Common myeloid progenitor, CD34-positive (primary cell): ENCODE measurements at regions of chr3 and their contacts with region 1.

Region 1: DNA sequence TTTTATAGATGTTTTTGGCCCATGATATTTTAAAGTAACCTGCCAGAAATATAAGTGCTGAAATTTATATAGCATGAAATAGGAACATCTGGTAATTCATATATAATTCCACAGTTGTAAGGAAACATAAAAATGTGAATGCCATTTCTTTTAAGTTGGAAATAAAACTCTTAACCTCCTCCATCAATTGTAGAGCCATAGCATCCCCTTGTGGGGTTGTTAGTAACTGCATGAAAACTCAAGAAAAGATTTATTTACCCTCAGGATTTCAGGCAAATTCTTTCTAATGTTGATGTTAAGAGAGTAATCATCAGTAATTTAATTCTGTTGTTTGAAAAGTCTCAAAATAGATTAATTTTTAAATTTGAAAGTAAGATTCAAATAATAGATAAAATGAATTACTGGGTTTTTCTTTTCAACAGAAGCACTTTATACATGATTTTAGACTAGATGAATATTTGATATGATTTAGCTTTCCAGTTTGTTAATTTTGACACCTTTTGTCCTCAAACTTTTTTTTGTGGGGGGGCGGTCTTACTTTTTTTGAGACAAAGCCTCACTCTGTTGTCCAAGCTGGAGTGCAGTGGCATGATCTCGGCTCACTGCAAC is 74.7 kb downstream of the RASA2 start:
- DNase-seq: peak; percentile 81 to 92 (median 85)
- H3K4me3 ChIP-seq: no peak overlapping the region
- H3K27ac ChIP-seq: no peak overlapping the region
- H3K4me1 ChIP-seq: peaks cover 20 to 28% (median 24%) of the 10 kb centered on the region in 4 experiments
- H3K27me3 ChIP-seq: no peaks in the 10 kb centered on the region

Region 2: GRCh38 chr3:141243271-141243707 is 318.2 kb before region 1 on chr3:
- CTCF ChIA-PET with region 1: no interaction called
- POLR2A ChIA-PET with region 1: no interaction called
- DNase-seq: no peak
- H3K4me3 ChIP-seq: no peak overlapping the region
- H3K27ac ChIP-seq: no peak overlapping the region
- H3K4me1 ChIP-seq: peaks cover 0 to 3% (median 0%) of the 10 kb centered on the region in 4 experiments
- H3K27me3 ChIP-seq: no peaks in the 10 kb centered on the region

Region 3: GRCh38 chr3:141386611-141387111 is 174.9 kb before region 1 on chr3:
- CTCF ChIA-PET with region 1: no interaction called
- POLR2A ChIA-PET with region 1: no interaction called
- DNase-seq: no peak
- H3K4me3 ChIP-seq: no peak overlapping the region
- H3K27ac ChIP-seq: no peak overlapping the region
- H3K4me1 ChIP-seq: peaks cover 0 to 4% (median 0%) of the 10 kb centered on the region in 4 experiments
- H3K27me3 ChIP-seq: no peaks in the 10 kb centered on the region

Region 4: GRCh38 chr3:141465221-141465620 is 96.3 kb before region 1 on chr3:
- CTCF ChIA-PET with region 1: interaction called, 382 read pairs
- POLR2A ChIA-PET with region 1: interaction called, 3 read pairs
- DNase-seq: no peak
- H3K4me3 ChIP-seq: no peak overlapping the region
- H3K27ac ChIP-seq: no peak overlapping the region
- H3K4me1 ChIP-seq: no peaks in the 10 kb centered on the region
- H3K27me3 ChIP-seq: no peaks in the 10 kb centered on the region

Region 5: GRCh38 chr3:141476033-141476432 is 85.5 kb before region 1 on chr3:
- CTCF ChIA-PET with region 1: interaction called, 37 read pairs
- POLR2A ChIA-PET with region 1: interaction called, 3 read pairs
- DNase-seq: peak in 2 of 3 donors; percentile 77 to 81
- H3K4me3 ChIP-seq: peak overlapping the region in 1 of 7 experiments; percentile 36
- H3K27ac ChIP-seq: no peak overlapping the region
- H3K4me1 ChIP-seq: peaks cover 13 to 28% (median 20%) of the 10 kb centered on the region in 4 experiments
- H3K27me3 ChIP-seq: no peaks in the 10 kb centered on the region

Region 6: GRCh38 chr3:141526709-141527108 is 34.8 kb before region 1 on chr3:
- CTCF ChIA-PET with region 1: interaction called, 11 read pairs
- POLR2A ChIA-PET with region 1: no interaction called
- DNase-seq: no peak
- H3K4me3 ChIP-seq: no peak overlapping the region
- H3K27ac ChIP-seq: no peak overlapping the region
- H3K4me1 ChIP-seq: peaks cover 20 to 60% (median 37%) of the 10 kb centered on the region in 4 experiments
- H3K27me3 ChIP-seq: no peaks in the 10 kb centered on the region